Ovary (tissue), 10 donors: ENCODE measurements at regions of chr10 and their contacts with region 1.

Region 1: GRCh38 chr10:110820321-110820814 is 51.4 kb upstream of the PDCD4 start:
- DNase-seq: peak; percentile 60 to 72 (median 66)
- H3K4me3 ChIP-seq: no peak overlapping the region
- H3K27ac ChIP-seq: peak overlapping the region; percentile 78 to 83
- H3K4me1 ChIP-seq: peaks cover 35% of the 10 kb centered on the region
- H3K27me3 ChIP-seq: no peaks in the 10 kb centered on the region
- CTCF ChIP-seq: no peak
- EP300 ChIP-seq: no peak
- POLR2A ChIP-seq: no peak

Region 2: DNA sequence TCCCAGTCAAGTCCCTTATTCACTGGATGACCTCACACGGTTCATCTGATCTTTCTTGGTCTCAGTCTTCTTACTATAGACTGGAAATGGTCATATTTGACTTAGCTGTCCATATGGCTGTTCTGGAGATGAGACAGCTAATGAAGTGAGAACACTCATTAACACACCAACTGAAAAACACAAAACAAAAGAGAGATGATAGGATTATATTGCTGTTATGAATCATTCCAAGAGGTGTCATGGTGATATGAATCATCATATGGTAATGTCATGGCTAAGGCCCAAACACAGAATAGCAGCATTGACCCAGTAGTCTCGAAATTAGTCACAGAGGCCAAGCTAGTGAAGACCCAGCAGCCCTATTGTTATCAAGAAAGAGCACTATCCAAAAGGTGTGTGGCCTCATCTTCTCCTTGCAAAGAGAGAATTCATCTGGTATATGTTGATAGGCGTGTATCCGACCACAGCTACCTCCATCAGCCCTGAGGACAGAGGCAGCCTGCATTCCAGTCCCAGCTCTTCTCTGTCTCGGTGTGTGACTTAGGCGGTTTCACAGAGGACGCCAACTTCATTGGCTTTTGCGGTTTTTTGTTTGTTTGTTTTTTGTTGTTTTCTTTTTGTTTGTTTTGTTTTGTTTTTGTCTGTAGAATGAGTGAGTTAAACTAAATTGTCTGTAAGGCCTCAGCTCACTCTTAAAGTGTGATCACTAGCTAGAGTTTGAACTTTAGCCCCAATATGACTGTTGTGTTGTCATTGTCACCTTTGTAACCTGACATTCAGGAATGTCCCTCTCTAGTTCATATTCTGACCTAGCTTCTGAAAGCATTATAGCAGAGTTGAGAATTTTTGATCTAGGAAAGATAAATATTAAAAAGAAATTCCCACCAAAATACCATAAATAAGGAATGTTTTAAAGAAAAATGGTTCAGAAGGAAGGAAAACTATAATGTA is 46.0 kb before region 1 on chr10:
- intact Hi-C with region 1: no loop called
- DNase-seq: no peak
- H3K4me3 ChIP-seq: no peak overlapping the region
- H3K27ac ChIP-seq: no peak overlapping the region
- H3K4me1 ChIP-seq: no peaks in the 10 kb centered on the region
- H3K27me3 ChIP-seq: no peaks in the 10 kb centered on the region
- CTCF ChIP-seq: no peak
- EP300 ChIP-seq: no peak
- POLR2A ChIP-seq: no peak

Region 3: GRCh38 chr10:110901954-110902819 is 81.8 kb after region 1 on chr10:
- intact Hi-C with region 1: loop called in 1 of 4 experiments (anchors 10 kb)
- DNase-seq: no peak
- H3K4me3 ChIP-seq: no peak overlapping the region
- H3K27ac ChIP-seq: no peak overlapping the region
- H3K4me1 ChIP-seq: no peaks in the 10 kb centered on the region
- H3K27me3 ChIP-seq: no peaks in the 10 kb centered on the region
- CTCF ChIP-seq: no peak
- EP300 ChIP-seq: no peak
- POLR2A ChIP-seq: no peak